ENCODE measurements at regions of chr1 and their contacts with region 1.

Region 1: GRCh38 chr1:219173758-219174588 is at the start of gene LYPLAL1:
- DNase-seq: peak; percentile 78 to 95 (median 87)
- ATAC-seq: peak; percentile 93
- H3K4me3 ChIP-seq: peak within 1 kb of the TSS; percentile 77 to 89
- H3K4me3 Mint-ChIP-seq: peak within 1 kb of the TSS; percentile 97
- H3K27ac ChIP-seq: peak within 1 kb of the TSS; percentile 74 to 78
- H3K27ac Mint-ChIP-seq: peak within 1 kb of the TSS; percentile 97
- H3K4me1 ChIP-seq: peaks cover 31% of the 10 kb centered on the region
- H3K4me1 Mint-ChIP-seq: peaks cover 50% of the 10 kb centered on the region
- H3K27me3 ChIP-seq: no peaks in the 10 kb centered on the region
- H3K27me3 Mint-ChIP-seq: no peaks in the 10 kb centered on the region
- CTCF ChIP-seq: no peak
- total RNA-seq, gene LYPLAL1: 6.9 to 8.7 TPM

Region 2: DNA sequence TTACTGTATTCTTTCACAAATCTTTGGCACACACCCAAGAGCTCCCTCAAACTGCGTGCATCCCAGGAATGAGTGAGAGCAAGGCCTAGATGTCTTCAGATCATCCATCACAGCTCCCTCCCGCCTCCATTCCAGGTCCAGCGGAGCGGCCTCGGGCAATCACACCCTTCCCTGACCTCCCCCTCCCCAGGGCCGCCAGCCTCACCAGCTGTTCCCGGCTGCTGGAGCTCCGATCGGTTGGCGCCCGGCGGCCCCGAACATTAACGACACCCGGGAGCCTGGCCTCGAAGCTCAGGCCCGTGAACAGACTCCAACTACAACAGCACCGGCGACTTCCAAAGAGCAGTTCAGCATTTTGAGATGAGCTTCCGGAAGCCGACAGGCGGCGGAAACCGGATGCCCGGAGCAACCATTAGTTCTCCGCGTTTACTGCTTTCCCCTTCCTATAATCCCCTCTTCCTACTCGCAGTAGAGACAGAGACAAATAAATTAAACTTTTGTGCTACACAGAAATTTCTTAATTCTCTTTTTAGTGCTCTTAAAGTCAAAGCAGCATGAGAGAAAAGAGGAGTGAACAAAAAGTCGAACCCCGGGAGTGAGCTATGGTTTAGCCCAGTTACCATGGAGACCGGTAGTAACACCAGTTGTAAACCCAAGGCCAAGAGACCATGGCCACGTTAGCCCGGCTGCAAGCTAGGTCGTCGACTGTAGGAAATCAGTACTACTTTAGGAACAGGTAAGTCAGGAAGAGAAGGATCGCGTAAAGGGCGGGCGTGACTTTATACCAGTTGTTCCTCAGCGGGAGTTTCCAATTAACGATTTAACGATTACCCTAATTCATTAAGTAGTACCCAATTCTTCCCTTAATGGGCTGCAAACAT is 1543.0 kb before region 1 on chr1 and contains the starts of genes GPATCH2 and SPATA17:
- CTCF ChIA-PET with region 1: no interaction called
- POLR2A ChIA-PET with region 1: no interaction called
- intact Hi-C with region 1: loop called (anchors 5 kb)
- DNase-seq: peak; percentile 51 to 94 (median 77)
- ATAC-seq: peak; percentile 89
- H3K4me3 ChIP-seq: peak within 1 kb of the TSS; percentile 76 to 89
- H3K4me3 Mint-ChIP-seq: peak within 1 kb of the TSS; percentile 98
- H3K27ac ChIP-seq: peak within 1 kb of the TSS; percentile 91 to 99
- H3K27ac Mint-ChIP-seq: peak within 1 kb of the TSS; percentile 99
- H3K4me1 ChIP-seq: peaks cover 21% of the 10 kb centered on the region
- H3K4me1 Mint-ChIP-seq: peaks cover 45% of the 10 kb centered on the region
- H3K27me3 ChIP-seq: no peaks in the 10 kb centered on the region
- H3K27me3 Mint-ChIP-seq: peaks cover 13% of the 10 kb centered on the region
- CTCF ChIP-seq: no peak
- total RNA-seq, gene GPATCH2: 7.2 to 7.6 TPM
- total RNA-seq, gene SPATA17: not detected

Region 3: DNA sequence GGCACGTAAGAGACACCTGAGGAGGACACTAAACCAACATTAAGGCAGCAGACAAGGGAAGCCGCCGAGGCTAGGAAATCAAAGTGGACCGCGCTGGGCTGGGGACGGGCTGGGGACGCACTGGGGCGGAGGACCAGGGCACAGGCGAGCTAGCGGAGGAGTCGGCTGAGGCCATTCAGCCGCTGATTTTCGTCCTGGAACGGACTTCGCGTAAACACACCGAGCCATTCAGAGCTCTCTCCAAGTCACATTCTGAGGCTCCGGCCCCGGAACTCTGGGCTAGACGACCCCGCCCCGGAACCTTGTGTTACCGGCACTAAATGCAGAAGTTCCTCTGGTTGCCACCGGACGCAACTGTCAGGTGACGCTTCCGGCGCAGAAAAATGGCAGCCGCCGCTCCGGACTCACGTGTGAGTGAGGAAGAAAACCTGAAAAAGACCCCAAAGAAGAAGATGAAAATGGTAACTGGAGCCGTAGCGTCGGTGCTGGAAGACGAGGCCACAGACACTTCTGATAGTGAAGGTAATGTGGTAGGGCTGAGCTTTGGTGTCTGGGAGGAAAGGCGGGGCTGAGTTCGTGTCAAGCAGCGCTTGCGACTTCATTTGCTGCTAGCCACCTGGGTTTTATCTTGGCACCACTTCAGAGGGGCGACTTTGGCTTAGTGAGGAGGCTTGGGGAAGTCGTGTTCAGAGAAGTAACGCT is 888.9 kb before region 1 on chr1 and contains the start of gene RRP15:
- CTCF ChIA-PET with region 1: no interaction called
- POLR2A ChIA-PET with region 1: no interaction called
- intact Hi-C with region 1: loop called (anchors 1 to 2 kb)
- DNase-seq: peak; percentile 70 to 92 (median 86)
- ATAC-seq: peak; percentile 95
- H3K4me3 ChIP-seq: peak within 1 kb of the TSS; percentile 71 to 89
- H3K4me3 Mint-ChIP-seq: peak within 1 kb of the TSS; percentile 99
- H3K27ac ChIP-seq: peak within 1 kb of the TSS; percentile 68 to 80
- H3K27ac Mint-ChIP-seq: peak within 1 kb of the TSS; percentile 97
- H3K4me1 ChIP-seq: peaks cover 23% of the 10 kb centered on the region
- H3K4me1 Mint-ChIP-seq: peaks cover 43% of the 10 kb centered on the region
- H3K27me3 ChIP-seq: no peaks in the 10 kb centered on the region
- H3K27me3 Mint-ChIP-seq: peaks cover 20% of the 10 kb centered on the region
- CTCF ChIP-seq: no peak
- total RNA-seq, gene RRP15: 16.1 to 16.7 TPM

Region 4: DNA sequence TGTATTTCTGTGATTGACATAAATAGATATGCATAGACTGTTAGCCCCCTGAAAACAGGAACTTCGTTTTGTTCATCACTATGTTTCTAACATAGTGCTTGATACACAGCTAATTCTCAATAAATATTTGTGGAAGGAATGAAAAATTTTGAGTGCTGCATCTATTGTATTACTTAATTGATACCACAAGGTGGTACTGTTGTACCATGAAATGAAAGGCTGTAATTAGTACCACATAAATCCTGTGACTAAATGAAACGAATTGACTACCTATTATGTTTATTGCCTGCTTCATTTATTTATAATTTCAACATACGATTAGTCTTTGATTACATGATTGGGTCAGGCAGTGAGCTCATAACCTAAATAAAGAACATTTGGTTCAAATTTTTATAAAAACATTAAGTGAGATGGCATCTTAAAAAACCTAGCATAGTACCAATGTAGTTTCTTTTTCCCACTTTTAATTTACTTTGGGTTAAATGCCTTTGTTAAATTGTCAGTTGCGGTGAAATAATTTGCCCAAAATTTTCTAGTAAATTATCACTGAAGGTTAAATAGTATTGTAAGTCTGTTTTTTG is 843.8 kb before region 1 on chr1:
- CTCF ChIA-PET with region 1: no interaction called
- POLR2A ChIA-PET with region 1: no interaction called
- intact Hi-C with region 1: loop called in 1 of 2 experiments (anchors 5 kb)
- DNase-seq: peak in 2 of 9 experiments; percentile 46 to 61
- ATAC-seq: peak; percentile 62
- H3K4me3 ChIP-seq: no peak overlapping the region
- H3K4me3 Mint-ChIP-seq: no peak overlapping the region
- H3K27ac ChIP-seq: no peak overlapping the region
- H3K27ac Mint-ChIP-seq: no peak overlapping the region
- H3K4me1 ChIP-seq: no peaks in the 10 kb centered on the region
- H3K4me1 Mint-ChIP-seq: no peaks in the 10 kb centered on the region
- H3K27me3 ChIP-seq: no peaks in the 10 kb centered on the region
- H3K27me3 Mint-ChIP-seq: no peaks in the 10 kb centered on the region
- CTCF ChIP-seq: peak; percentile 86

Region 5: DNA sequence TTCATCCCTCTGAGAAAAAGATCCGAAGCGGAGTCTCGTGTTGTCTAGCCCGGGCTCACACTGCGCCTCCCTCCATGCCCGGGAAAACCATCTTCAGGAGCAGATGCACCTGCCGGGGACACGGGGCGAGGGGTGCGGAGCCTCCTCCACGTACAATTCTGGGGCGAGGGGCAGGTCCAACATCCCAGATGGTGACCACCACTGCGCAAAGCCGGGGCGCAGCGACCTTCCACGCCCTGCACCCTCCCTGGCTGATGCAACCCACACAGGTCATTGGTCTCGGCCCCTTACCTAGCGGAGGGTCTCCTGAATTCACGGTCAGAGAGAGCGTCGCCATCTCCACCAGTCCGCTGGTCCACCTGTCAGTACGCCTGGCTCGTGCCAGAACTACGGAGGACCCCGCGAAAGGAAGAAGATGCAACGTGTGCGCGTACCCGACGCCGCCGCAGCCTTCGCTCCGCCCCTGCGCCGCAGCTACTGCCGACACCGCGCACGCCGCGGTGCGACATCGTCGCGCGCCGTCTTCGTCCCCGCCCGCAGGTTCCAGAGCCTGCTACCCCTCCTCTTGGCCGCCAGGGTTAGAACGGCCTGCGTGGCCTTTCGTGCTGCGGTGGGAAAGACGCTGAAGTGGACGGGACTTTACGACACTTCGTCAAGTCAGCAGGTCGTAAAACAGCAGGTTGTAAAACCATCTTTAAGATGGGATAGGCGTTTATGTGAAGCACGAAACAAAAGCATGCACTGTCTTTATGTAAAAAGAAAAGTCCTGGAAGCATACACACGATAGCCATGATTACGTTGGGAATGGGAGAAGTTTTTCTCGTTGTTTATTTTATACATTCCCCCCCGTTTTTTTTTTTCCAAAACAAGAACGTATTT is 872.3 kb after region 1 on chr1 and contains the start of gene EPRS1:
- CTCF ChIA-PET with region 1: no interaction called
- POLR2A ChIA-PET with region 1: no interaction called
- intact Hi-C with region 1: loop called in 1 of 2 experiments (anchors 5 kb)
- DNase-seq: peak; percentile 88 to 99 (median 93)
- ATAC-seq: peak; percentile 98
- H3K4me3 ChIP-seq: peak within 1 kb of the TSS; percentile 89 to 98
- H3K4me3 Mint-ChIP-seq: peak within 1 kb of the TSS; percentile 95
- H3K27ac ChIP-seq: peak within 1 kb of the TSS; percentile 81 to 84
- H3K27ac Mint-ChIP-seq: peak within 1 kb of the TSS; percentile 94
- H3K4me1 ChIP-seq: peaks cover 27% of the 10 kb centered on the region
- H3K4me1 Mint-ChIP-seq: peaks cover 39% of the 10 kb centered on the region
- H3K27me3 ChIP-seq: no peaks in the 10 kb centered on the region
- H3K27me3 Mint-ChIP-seq: no peaks in the 10 kb centered on the region
- CTCF ChIP-seq: peak; percentile 52
- total RNA-seq, gene EPRS1: 42.8 to 44.2 TPM

Region 6: DNA sequence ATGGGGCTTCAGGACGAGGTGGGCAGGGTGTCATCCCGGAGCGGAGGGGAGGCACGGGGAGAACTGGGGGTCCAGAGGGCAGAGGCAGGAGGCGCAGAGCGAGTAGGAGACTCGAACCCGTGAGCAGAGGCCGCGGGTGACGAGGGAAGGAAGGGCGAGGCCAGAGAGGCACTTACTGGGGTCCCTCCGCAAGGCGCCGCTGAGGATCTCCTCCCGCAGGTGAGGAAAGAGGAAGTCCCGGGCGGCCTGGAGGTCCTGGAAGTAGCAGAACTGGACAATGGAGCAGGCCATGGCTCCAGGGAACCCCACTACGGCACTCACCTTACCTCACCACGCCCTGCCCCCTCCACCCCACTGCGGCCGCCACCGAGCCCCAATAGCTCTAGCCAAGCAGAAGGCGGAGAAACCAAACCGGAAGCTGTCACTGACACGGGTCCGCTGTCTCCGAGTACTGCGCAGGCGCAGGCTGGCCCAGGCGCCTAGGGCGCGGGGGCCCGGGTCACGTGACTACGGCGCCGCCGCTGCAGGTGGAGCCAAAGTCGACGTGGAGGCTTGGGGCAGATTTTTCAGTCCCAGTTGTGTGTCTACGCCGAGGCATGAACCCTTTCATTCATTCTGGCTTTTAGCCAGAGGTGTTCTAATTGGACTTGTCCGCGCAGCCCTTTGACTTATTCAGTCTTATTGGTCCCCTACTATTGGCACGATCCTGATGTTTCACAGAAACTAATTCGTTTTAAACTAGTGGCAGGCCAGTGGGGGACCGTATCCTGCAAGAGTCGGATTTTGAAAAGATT is 1098.3 kb after region 1 on chr1 and contains the start of gene RAB3GAP2:
- CTCF ChIA-PET with region 1: no interaction called
- POLR2A ChIA-PET with region 1: no interaction called
- intact Hi-C with region 1: loop called (anchors 2 to 5 kb)
- DNase-seq: peak; percentile 95 to 98 (median 97)
- ATAC-seq: peak; percentile 91
- H3K4me3 ChIP-seq: peak within 1 kb of the TSS; percentile 94 to 98
- H3K4me3 Mint-ChIP-seq: no peak within 1 kb of the TSS
- H3K27ac ChIP-seq: peak within 1 kb of the TSS; percentile 94 to 95
- H3K27ac Mint-ChIP-seq: no peak within 1 kb of the TSS
- H3K4me1 ChIP-seq: peaks cover 29% of the 10 kb centered on the region
- H3K4me1 Mint-ChIP-seq: peaks cover 16% of the 10 kb centered on the region
- H3K27me3 ChIP-seq: no peaks in the 10 kb centered on the region
- H3K27me3 Mint-ChIP-seq: peaks cover 2% of the 10 kb centered on the region
- CTCF ChIP-seq: no peak
- total RNA-seq, gene RAB3GAP2: 34.3 to 34.6 TPM

Measured in CD8-positive, alpha-beta T cell (primary cell).